ENCODE measurements at regions of chr6 and their contacts with region 1.

Region 1: GRCh38 chr6:32838114-32838958 is at the start of gene TAP2:
- DNase-seq: peak; percentile 93 to 99 (median 98)
- ATAC-seq: peak; percentile 86
- H3K4me3 ChIP-seq: peak within 1 kb of the TSS; percentile 77
- H3K4me3 Mint-ChIP-seq: peak within 1 kb of the TSS; percentile 97
- H3K27ac ChIP-seq: peak within 1 kb of the TSS; percentile 76 to 87
- H3K27ac Mint-ChIP-seq: peak within 1 kb of the TSS; percentile 99
- H3K4me1 ChIP-seq: peaks cover 67% of the 10 kb centered on the region
- H3K4me1 Mint-ChIP-seq: peaks cover 94% of the 10 kb centered on the region
- H3K27me3 ChIP-seq: no peaks in the 10 kb centered on the region
- H3K27me3 Mint-ChIP-seq: no peaks in the 10 kb centered on the region
- CTCF ChIP-seq: peak; percentile 93
- total RNA-seq, gene TAP2: 165 to 171 TPM

Region 2: DNA sequence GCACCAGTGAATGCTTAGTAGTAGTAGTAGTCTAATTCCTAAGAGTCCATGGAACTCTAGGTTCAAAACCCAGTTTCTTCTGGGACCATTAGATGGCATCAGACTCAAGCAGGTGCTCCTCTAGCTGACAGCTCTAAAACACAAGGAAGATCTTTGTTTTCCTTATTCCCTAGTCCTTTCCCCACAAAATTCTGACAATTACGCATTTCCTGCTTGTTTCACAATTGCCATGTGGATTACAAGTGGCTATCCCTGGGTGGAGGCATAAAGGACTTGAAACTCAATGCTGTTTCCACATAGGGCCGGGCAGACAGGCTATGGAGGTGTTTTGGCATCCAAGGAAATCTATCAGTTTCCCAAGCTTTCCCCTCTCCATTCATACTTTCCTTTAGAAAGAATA is 12.4 kb before region 1 on chr6:
- CTCF ChIA-PET with region 1: interaction called, 19 read pairs
- POLR2A ChIA-PET with region 1: interaction called, 12 read pairs
- intact Hi-C with region 1: no loop called
- DNase-seq: peak in 1 of 14 experiments; percentile 43
- ATAC-seq: no peak
- H3K4me3 ChIP-seq: no peak overlapping the region
- H3K4me3 Mint-ChIP-seq: no peak overlapping the region
- H3K27ac ChIP-seq: no peak overlapping the region
- H3K27ac Mint-ChIP-seq: no peak overlapping the region
- H3K4me1 ChIP-seq: no peaks in the 10 kb centered on the region
- H3K4me1 Mint-ChIP-seq: no peaks in the 10 kb centered on the region
- H3K27me3 ChIP-seq: no peaks in the 10 kb centered on the region
- H3K27me3 Mint-ChIP-seq: no peaks in the 10 kb centered on the region
- CTCF ChIP-seq: peak; percentile 26

Region 3: GRCh38 chr6:32853541-32854375 is 15.4 kb after region 1 on chr6 and contains the starts of genes PSMB9 and TAP1:
- CTCF ChIA-PET with region 1: interaction called, 288 read pairs
- POLR2A ChIA-PET with region 1: interaction called, 901 read pairs
- intact Hi-C with region 1: loop called (anchors 1 kb)
- DNase-seq: peak; percentile 88 to 98 (median 94)
- ATAC-seq: peak; percentile 81
- H3K4me3 ChIP-seq: peak within 1 kb of the TSS; percentile 94
- H3K4me3 Mint-ChIP-seq: peak within 1 kb of the TSS; percentile 98
- H3K27ac ChIP-seq: peak within 1 kb of the TSS; percentile 98 to 100
- H3K27ac Mint-ChIP-seq: peak within 1 kb of the TSS; percentile 99
- H3K4me1 ChIP-seq: peaks cover 77% of the 10 kb centered on the region
- H3K4me1 Mint-ChIP-seq: peaks cover 86% of the 10 kb centered on the region
- H3K27me3 ChIP-seq: no peaks in the 10 kb centered on the region
- H3K27me3 Mint-ChIP-seq: no peaks in the 10 kb centered on the region
- CTCF ChIP-seq: peak; percentile 97
- total RNA-seq, gene PSMB9: 37.2 to 38.4 TPM
- total RNA-seq, gene TAP1: 91.5 to 93.9 TPM

Region 4: GRCh38 chr6:32862725-32863124 is 24.4 kb after region 1 on chr6:
- CTCF ChIA-PET with region 1: interaction called, 288 read pairs
- POLR2A ChIA-PET with region 1: interaction called, 901 read pairs
- intact Hi-C with region 1: no loop called
- DNase-seq: no peak
- ATAC-seq: no peak
- H3K4me3 ChIP-seq: no peak overlapping the region
- H3K4me3 Mint-ChIP-seq: no peak overlapping the region
- H3K27ac ChIP-seq: no peak overlapping the region
- H3K27ac Mint-ChIP-seq: no peak overlapping the region
- H3K4me1 ChIP-seq: peaks cover 31% of the 10 kb centered on the region
- H3K4me1 Mint-ChIP-seq: peaks cover 39% of the 10 kb centered on the region
- H3K27me3 ChIP-seq: no peaks in the 10 kb centered on the region
- H3K27me3 Mint-ChIP-seq: no peaks in the 10 kb centered on the region
- CTCF ChIP-seq: no peak

Region 5: DNA sequence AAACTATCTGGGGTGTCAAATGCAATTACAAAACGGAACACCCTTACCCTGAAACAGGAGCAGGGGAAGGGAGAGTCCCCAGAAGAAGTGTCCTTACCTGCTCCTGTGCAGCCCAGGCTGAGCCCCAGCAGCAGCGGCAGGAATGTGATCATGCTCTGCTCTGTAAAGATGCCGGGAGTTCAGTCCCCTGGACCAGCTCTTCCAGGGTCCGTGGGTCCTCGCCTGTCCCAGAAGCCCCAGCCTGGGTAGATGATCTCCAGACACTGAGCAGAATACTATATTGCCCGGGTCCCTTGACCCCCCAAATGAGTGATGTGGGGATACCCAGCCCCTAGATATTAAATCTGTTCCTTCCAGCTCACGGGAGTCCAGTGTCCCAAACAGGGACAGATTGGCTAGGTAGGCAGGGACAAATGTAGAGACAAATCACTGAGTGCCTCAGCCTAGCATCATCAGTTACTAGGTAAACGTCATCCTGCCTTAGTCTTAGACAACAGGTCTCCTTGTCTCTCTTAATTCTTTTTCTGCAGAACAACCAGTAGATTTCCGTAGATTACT is 102.4 kb after region 1 on chr6 and contains the start of gene HLA-DMB:
- CTCF ChIA-PET with region 1: interaction called, 14 read pairs
- POLR2A ChIA-PET with region 1: interaction called, 23 read pairs
- intact Hi-C with region 1: no loop called
- DNase-seq: peak in 10 of 14 experiments; percentile 15 to 89 (median 42)
- ATAC-seq: peak; percentile 85
- H3K4me3 ChIP-seq: peak within 1 kb of the TSS; percentile 72
- H3K4me3 Mint-ChIP-seq: peak within 1 kb of the TSS; percentile 96
- H3K27ac ChIP-seq: peak within 1 kb of the TSS; percentile 86 to 89
- H3K27ac Mint-ChIP-seq: peak within 1 kb of the TSS; percentile 99
- H3K4me1 ChIP-seq: peaks cover 58% of the 10 kb centered on the region
- H3K4me1 Mint-ChIP-seq: peaks cover 60% of the 10 kb centered on the region
- H3K27me3 ChIP-seq: no peaks in the 10 kb centered on the region
- H3K27me3 Mint-ChIP-seq: no peaks in the 10 kb centered on the region
- CTCF ChIP-seq: no peak
- total RNA-seq, gene HLA-DMB: 4.6 to 6.0 TPM

Region 6: DNA sequence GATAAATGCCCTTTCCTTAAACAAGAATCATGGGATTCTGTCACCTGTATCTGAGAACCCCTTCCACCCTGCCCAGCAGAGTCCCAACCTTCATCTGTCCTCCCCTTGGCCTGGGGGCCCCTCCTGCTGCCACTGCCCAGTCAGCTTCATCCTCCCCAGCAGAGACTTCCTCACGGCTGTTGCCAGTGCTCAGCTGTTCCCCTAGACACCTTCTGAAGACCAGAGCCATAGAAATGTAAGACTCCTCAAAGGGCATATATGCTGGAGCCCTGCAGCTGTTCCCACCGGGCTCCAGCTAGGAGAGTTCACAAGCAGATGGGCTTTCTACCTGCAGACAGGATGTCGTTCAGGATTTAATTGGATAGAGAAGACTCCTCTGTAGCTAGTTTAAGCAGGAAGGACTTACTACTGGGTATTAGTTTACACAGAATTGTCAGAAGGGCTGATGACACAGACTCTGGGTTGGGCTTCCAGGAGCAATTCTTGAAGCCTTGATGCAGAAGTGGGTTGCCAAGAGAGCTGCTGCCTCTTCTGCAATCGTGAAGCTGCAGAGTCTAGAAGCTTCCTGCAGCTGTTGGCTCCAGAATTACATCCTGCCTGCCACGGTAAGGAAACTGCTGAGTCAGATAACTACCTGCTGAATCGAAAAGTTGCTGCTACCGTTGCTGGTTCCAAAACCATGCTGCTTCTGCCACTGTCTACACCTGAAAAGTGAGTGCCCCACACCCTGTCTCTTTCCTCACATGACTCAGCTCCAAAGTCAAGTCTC is 1022.6 kb after region 1 on chr6:
- CTCF ChIA-PET with region 1: no interaction called
- POLR2A ChIA-PET with region 1: no interaction called
- intact Hi-C with region 1: no loop called
- DNase-seq: peak in 11 of 14 experiments; percentile 5 to 63 (median 34)
- ATAC-seq: peak; percentile 57
- H3K4me3 ChIP-seq: no peak overlapping the region
- H3K4me3 Mint-ChIP-seq: peak overlapping the region; percentile 39
- H3K27ac ChIP-seq: no peak overlapping the region
- H3K27ac Mint-ChIP-seq: peak overlapping the region; percentile 10
- H3K4me1 ChIP-seq: peaks cover 73% of the 10 kb centered on the region
- H3K4me1 Mint-ChIP-seq: peaks cover 71% of the 10 kb centered on the region
- H3K27me3 ChIP-seq: peaks cover 0 to 10% of the 10 kb centered on the region in 2 experiments
- H3K27me3 Mint-ChIP-seq: no peaks in the 10 kb centered on the region
- CTCF ChIP-seq: no peak